ENCODE measurements at regions of chr9 and their contacts with region 1.

Region 1: DNA sequence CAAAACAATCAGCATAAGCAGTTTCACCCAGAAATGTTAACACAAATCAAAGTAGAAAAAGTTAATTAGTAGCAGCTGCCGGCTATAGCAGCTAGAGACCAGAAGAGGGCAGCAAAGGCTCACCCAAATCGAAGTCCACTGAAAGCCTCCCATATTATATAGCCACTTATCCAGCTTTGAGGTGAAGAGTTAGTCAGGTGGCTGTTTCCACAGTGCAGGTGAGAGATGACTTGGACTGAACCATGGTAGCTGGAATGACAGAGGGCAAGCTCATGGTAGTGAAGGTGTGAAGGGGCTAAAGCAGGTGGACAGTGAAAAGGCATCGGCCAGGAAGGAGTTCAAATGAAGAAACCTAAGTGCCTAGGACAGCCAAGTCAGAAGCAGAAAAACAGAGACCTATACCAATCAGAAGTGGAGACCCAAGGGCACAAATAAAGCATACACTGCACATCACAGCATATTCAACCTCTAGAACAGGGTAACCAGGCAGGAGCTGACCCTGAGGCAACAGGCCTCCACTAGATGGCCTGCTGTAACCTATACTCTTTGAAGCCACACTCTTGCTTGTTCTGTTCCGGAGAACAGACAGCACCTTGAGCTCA is 7.2 kb upstream of the RNF38 start:
- DNase-seq: peak; percentile 25
- ATAC-seq: peak; percentile 95
- H3K4me3 ChIP-seq: no peak overlapping the region
- H3K27ac ChIP-seq: no peak overlapping the region
- H3K4me1 ChIP-seq: no peaks in the 10 kb centered on the region
- H3K27me3 ChIP-seq: no peaks in the 10 kb centered on the region
- CTCF ChIP-seq: peak; percentile 84 to 93 (median 92)
- EP300 ChIP-seq: no peak
- POLR2A ChIP-seq: no peak
- RAD21 ChIP-seq: peak; percentile 87

Region 2: GRCh38 chr9:35996358-35996975 is 410.8 kb before region 1 on chr9:
- CTCF ChIA-PET with region 1: no interaction called
- POLR2A ChIA-PET with region 1: no interaction called
- RAD21 ChIA-PET with region 1: no interaction called
- SMC1A ChIA-PET with region 1: no interaction called
- in situ Hi-C with region 1: no loop called
- intact Hi-C with region 1: no loop called
- DNase-seq: no peak
- ATAC-seq: no peak
- H3K4me3 ChIP-seq: no peak overlapping the region
- H3K27ac ChIP-seq: no peak overlapping the region
- H3K4me1 ChIP-seq: no peaks in the 10 kb centered on the region
- H3K27me3 ChIP-seq: no peaks in the 10 kb centered on the region
- CTCF ChIP-seq: no peak
- EP300 ChIP-seq: no peak
- POLR2A ChIP-seq: no peak
- RAD21 ChIP-seq: no peak

Region 3: DNA sequence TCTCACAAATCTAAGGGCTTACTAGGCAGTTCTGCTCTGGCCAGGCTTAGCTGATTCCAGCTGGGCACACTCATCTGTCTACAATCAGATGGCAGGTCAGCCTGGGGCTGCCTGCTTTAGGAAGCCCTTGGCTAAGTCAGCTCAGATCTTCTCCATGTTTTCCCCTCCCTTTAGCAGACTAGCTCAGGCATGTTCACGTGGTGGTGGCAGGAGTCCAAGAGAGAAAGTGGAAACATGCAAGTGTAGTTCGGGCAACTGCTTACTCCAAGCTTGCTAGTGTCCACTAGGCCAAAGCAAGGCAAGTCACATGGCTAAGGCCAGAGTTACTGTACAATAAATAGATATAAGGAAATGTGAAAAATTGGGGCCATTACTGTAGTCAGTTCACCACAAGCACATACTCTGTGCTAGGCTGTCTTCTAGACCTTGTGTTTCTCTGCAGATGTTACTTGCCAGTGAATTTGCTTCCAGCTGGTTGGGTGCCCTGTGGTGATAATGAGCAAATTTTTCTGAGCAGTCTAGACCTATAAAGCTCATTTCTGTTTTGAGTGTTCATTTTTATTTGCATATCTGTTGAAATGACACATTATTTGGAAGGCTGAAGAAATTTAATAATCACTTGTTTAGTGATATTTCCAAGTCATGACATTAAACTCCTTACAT is 332.2 kb before region 1 on chr9:
- CTCF ChIA-PET with region 1: no interaction called
- POLR2A ChIA-PET with region 1: no interaction called
- RAD21 ChIA-PET with region 1: no interaction called
- SMC1A ChIA-PET with region 1: no interaction called
- in situ Hi-C with region 1: no loop called
- intact Hi-C with region 1: no loop called
- DNase-seq: no peak
- ATAC-seq: no peak
- H3K4me3 ChIP-seq: no peak overlapping the region
- H3K27ac ChIP-seq: no peak overlapping the region
- H3K4me1 ChIP-seq: no peaks in the 10 kb centered on the region
- H3K27me3 ChIP-seq: no peaks in the 10 kb centered on the region
- CTCF ChIP-seq: no peak
- EP300 ChIP-seq: no peak
- POLR2A ChIP-seq: no peak
- RAD21 ChIP-seq: no peak

Region 4: DNA sequence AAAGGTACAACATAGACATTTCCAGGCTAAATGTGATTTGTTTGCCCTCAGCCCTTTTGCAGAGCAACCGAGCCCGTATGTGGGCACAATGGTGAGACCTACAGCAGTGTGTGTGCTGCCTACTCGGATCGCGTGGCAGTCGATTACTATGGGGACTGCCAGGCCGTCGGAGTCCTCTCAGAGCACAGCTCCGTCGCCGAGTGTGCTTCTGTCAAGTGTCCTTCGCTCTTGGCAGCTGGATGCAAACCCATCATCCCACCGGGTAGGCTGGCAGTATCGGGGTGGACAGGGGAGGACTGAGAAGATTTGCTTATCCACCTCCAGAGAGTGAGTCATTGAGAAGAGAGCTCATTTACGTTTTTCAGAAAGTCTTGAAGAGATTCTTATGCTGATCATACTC is 288.5 kb before region 1 on chr9:
- CTCF ChIA-PET with region 1: no interaction called
- POLR2A ChIA-PET with region 1: no interaction called
- RAD21 ChIA-PET with region 1: no interaction called
- SMC1A ChIA-PET with region 1: no interaction called
- in situ Hi-C with region 1: no loop called
- intact Hi-C with region 1: no loop called
- DNase-seq: no peak
- ATAC-seq: no peak
- H3K4me3 ChIP-seq: no peak overlapping the region
- H3K27ac ChIP-seq: no peak overlapping the region
- H3K4me1 ChIP-seq: no peaks in the 10 kb centered on the region
- H3K27me3 ChIP-seq: peaks cover 0 to 2% of the 10 kb centered on the region in 2 experiments; a peak in 2 of 4 replicates
- CTCF ChIP-seq: no peak
- EP300 ChIP-seq: no peak
- POLR2A ChIP-seq: no peak
- RAD21 ChIP-seq: no peak

Region 5: DNA sequence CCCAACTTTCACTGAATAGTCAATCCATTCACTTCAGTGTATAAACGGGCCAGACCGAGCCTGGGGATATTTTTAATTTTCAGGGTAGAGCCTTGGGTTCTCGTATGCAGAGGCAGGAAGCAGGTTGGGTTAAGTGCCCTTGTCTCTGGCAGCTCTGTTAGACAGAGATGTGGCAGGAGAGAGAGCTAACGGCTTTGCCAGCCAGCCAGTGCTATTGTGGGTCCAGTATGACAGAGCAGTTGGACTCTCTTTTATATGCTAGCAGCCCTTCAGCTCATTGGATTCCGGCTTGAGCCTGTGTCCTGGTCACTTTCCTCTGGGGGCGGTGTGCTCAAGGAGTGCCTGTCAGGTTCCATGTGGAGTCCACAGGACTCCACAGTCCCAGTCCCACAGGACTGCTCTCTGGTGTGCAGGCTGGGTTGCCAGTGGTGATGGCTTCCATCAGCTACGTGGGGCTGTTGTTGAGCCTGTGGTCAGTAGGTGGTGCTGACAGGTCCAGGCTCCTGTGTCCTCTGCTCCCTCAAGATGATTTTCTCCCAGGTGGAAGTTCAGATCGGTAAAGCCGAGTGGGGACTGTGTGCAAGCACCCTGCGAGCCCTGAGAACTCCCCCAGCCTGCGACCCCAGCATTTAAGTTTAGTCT is 202.2 kb before region 1 on chr9:
- CTCF ChIA-PET with region 1: no interaction called
- POLR2A ChIA-PET with region 1: no interaction called
- RAD21 ChIA-PET with region 1: no interaction called
- SMC1A ChIA-PET with region 1: no interaction called
- in situ Hi-C with region 1: no loop called
- intact Hi-C with region 1: no loop called
- DNase-seq: no peak
- ATAC-seq: peak; percentile 37; the same call in 2 of the 3 replicates
- H3K4me3 ChIP-seq: no peak overlapping the region
- H3K27ac ChIP-seq: no peak overlapping the region
- H3K4me1 ChIP-seq: peaks cover 3% of the 10 kb centered on the region; the same call in 1 of the 2 replicates
- H3K27me3 ChIP-seq: no peaks in the 10 kb centered on the region
- CTCF ChIP-seq: no peak
- EP300 ChIP-seq: no peak
- POLR2A ChIP-seq: no peak
- RAD21 ChIP-seq: no peak

Region 6: GRCh38 chr9:36392489-36392888 is 14.7 kb before region 1 on chr9:
- CTCF ChIA-PET with region 1: interaction called, 16 read pairs
- POLR2A ChIA-PET with region 1: no interaction called
- RAD21 ChIA-PET with region 1: interaction called, 5 read pairs
- SMC1A ChIA-PET with region 1: interaction called, 10 read pairs
- in situ Hi-C with region 1: no loop called
- intact Hi-C with region 1: no loop called
- DNase-seq: no peak
- ATAC-seq: peak; percentile 35; the same call in 1 of the 3 replicates
- H3K4me3 ChIP-seq: no peak overlapping the region
- H3K27ac ChIP-seq: no peak overlapping the region
- H3K4me1 ChIP-seq: 0 out of 2 replicates have a peak, but pooled peaks cover 3% of the 10 kb centered on the region
- H3K27me3 ChIP-seq: no peaks in the 10 kb centered on the region
- CTCF ChIP-seq: no peak
- EP300 ChIP-seq: no peak
- POLR2A ChIP-seq: no peak
- RAD21 ChIP-seq: no peak

Region 7: GRCh38 chr9:36441966-36442365 is 34.7 kb after region 1 on chr9:
- CTCF ChIA-PET with region 1: interaction called, 98 read pairs
- POLR2A ChIA-PET with region 1: interaction called, 6 read pairs
- RAD21 ChIA-PET with region 1: interaction called, 12 read pairs
- SMC1A ChIA-PET with region 1: interaction called, 15 read pairs
- in situ Hi-C with region 1: no loop called
- intact Hi-C with region 1: no loop called
- DNase-seq: no peak
- ATAC-seq: no peak
- H3K4me3 ChIP-seq: no peak overlapping the region
- H3K27ac ChIP-seq: no peak overlapping the region
- H3K4me1 ChIP-seq: no peaks in the 10 kb centered on the region
- H3K27me3 ChIP-seq: no peaks in the 10 kb centered on the region
- CTCF ChIP-seq: no peak
- EP300 ChIP-seq: no peak
- POLR2A ChIP-seq: no peak
- RAD21 ChIP-seq: no peak

Region 8: DNA sequence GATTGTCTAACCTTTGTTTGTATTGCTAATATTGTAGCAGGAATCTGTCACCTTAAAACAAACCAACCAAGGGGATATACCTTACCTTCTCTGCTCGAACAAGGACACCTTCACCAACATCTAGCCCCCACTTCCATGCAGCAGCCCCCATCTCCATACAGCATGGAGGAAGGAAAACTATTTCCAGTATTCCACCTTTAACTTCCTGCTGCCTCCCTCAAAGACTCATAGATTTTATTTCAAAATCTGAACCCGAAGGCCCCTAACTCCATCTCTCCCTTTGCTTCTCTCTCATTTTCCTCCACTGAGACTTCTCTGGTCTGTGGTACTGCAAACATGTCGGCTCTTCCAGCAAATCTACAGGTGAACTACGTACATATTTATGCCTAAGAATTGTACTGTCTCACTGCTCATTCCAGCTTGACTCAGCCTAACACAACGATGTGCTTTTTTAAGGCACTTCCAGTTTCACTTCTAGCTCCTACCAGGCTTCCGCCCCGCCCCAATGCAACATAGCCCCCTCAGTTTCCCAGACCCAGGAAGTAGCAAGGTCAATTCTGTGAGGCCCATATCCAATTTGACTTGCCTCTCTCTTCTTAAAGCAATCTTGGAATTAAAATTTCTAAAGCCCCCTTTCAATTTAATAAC is 63.5 kb after region 1 on chr9:
- CTCF ChIA-PET with region 1: interaction called, 16 read pairs
- POLR2A ChIA-PET with region 1: interaction called, 3 read pairs
- RAD21 ChIA-PET with region 1: interaction called, 7 read pairs
- SMC1A ChIA-PET with region 1: interaction called, 5 read pairs
- in situ Hi-C with region 1: no loop called
- intact Hi-C with region 1: no loop called
- DNase-seq: peak; percentile 67
- ATAC-seq: peak; percentile 98
- H3K4me3 ChIP-seq: peak overlapping the region; percentile 66
- H3K27ac ChIP-seq: peak overlapping the region; percentile 91
- H3K4me1 ChIP-seq: peaks cover 15% of the 10 kb centered on the region
- H3K27me3 ChIP-seq: no peaks in the 10 kb centered on the region
- CTCF ChIP-seq: no peak
- EP300 ChIP-seq: 0 out of 4 replicates have a peak, but pooled peaks of 1 of the 2 experiments have one; percentile 11
- POLR2A ChIP-seq: peak; percentile 53
- RAD21 ChIP-seq: no peak

Region 9: DNA sequence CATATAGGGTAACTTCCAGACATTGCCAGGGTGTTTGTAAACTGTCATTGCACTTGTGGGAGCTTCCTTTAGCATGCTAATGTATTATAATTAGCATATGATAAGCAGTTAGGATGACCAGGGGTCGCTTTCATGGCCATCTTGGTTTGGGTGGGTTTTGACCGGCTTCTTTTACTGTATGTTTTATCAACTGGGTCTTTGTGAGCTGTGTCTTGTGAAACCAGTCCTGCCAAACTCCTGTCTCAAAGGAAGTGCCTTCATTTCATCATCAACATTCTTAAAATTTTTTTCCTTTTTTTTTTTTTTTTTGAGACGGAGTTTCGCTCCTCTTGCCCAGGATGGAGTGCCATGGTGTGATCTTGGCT is 153.6 kb after region 1 on chr9:
- CTCF ChIA-PET with region 1: interaction called, 421 read pairs
- POLR2A ChIA-PET with region 1: interaction called, 6 read pairs
- RAD21 ChIA-PET with region 1: interaction called, 156 read pairs
- SMC1A ChIA-PET with region 1: interaction called, 287 read pairs
- in situ Hi-C with region 1: no loop called
- intact Hi-C with region 1: no loop called
- DNase-seq: no peak
- ATAC-seq: no peak
- H3K4me3 ChIP-seq: no peak overlapping the region
- H3K27ac ChIP-seq: no peak overlapping the region
- H3K4me1 ChIP-seq: no peaks in the 10 kb centered on the region
- H3K27me3 ChIP-seq: no peaks in the 10 kb centered on the region
- CTCF ChIP-seq: no peak
- EP300 ChIP-seq: no peak
- POLR2A ChIP-seq: no peak
- RAD21 ChIP-seq: no peak

Region 10: GRCh38 chr9:36728651-36729520 is 321.7 kb after region 1 on chr9:
- CTCF ChIA-PET with region 1: interaction called, 55 read pairs
- POLR2A ChIA-PET with region 1: no interaction called
- RAD21 ChIA-PET with region 1: interaction called, 35 read pairs
- SMC1A ChIA-PET with region 1: interaction called, 37 read pairs
- in situ Hi-C with region 1: loop called (anchors 25 kb)
- intact Hi-C with region 1: loop called (anchors 2 kb)
- DNase-seq: peak; percentile 13
- ATAC-seq: peak; percentile 86
- H3K4me3 ChIP-seq: no peak overlapping the region
- H3K27ac ChIP-seq: no peak overlapping the region
- H3K4me1 ChIP-seq: peaks cover 6% of the 10 kb centered on the region
- H3K27me3 ChIP-seq: no peaks in the 10 kb centered on the region
- CTCF ChIP-seq: peak; percentile 85 to 95 (median 94); a peak in 5 of 6 replicates
- EP300 ChIP-seq: no peak
- POLR2A ChIP-seq: no peak
- RAD21 ChIP-seq: peak; percentile 92